BJ (cell line): ENCODE measurements at regions of chr14 and their contacts with region 1.

Region 1: DNA sequence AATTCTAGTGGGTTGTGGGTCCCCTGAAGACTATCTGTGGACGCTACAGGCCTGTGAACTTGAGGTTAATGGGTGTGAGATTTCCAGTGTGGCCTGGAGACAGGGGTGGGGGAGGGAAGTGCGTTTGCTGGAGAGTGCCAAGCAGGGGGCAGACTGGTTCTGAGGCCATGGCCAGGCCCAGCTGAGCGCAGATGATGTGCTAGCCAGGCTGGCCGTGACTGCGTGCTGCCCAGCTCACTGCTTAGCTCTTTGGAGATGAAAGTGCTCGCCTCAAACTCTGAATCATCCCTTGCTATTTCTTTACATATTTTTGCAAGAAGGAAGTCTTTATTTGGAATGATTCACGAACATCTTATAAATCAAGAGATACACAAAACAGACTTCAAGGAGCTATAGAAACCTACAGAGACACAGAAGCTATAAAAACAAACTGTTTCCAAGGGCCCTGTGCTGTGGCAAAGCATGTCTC is 75.2 kb upstream of the PLEKHG3 start:
- DNase-seq: peak; percentile 96
- H3K4me3 ChIP-seq: no peak overlapping the region
- H3K27me3 ChIP-seq: no peaks in the 10 kb centered on the region
- CTCF ChIP-seq: peak; percentile 20; the same call in 1 of the 2 replicates

Region 2: DNA sequence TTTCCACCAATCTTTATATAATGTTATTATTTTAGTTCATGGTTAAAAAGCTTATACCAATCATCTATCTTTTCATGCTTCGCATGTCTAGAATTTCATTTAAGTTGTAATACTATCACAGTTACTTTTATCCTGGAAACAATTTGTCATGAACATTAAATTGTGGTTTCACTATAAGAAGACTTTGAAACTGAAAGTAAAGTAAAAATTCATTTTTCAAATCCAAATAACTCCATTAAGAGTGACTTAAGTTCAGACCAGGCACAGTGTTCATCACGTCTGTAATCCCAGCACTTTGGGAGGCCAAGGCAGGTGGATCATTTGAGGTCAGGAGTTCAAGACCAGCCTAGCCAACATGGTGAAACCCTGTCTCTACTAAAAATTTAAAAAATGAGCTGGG is 347.2 kb before region 1 on chr14:
- CTCF ChIA-PET with region 1: no interaction called
- POLR2A ChIA-PET with region 1: no interaction called
- DNase-seq: no peak
- H3K4me3 ChIP-seq: no peak overlapping the region
- H3K27me3 ChIP-seq: no peaks in the 10 kb centered on the region; the same call in 1 of the 2 replicates
- CTCF ChIP-seq: no peak

Region 3: DNA sequence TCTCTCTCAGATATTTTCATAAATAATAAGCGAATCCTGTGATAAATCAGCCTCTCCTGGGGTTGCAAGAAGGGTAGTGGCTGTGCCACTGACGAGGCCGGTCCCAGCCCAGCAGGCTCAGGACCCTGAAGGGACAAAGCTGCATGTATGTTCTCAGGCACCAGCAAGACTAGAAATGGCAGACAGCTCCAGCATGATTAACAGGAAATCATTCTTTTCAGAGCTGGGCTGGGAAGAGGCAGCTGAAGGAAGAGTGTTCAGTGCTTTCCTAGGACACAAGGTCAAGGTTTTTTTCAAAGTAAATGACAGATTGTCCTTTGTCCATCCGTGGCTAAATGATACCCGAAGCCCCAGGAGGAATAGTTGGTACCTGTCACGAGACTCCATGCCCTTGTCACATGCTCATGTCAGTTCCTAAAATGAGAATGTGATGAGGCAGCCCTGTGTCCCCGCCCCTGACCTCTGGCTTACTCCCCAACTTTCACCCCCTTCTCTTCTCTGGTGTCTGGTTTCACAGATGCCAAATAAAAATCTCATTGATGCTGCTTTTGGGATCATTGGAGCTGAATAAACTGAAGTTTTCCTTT is 14.1 kb before region 1 on chr14:
- CTCF ChIA-PET with region 1: interaction called, 15 read pairs
- POLR2A ChIA-PET with region 1: no interaction called
- DNase-seq: no peak
- H3K4me3 ChIP-seq: no peak overlapping the region
- H3K27me3 ChIP-seq: no peaks in the 10 kb centered on the region
- CTCF ChIP-seq: no peak

Region 4: GRCh38 chr14:64726585-64726890 is 97.6 kb after region 1 on chr14:
- CTCF ChIA-PET with region 1: no interaction called
- POLR2A ChIA-PET with region 1: no interaction called
- DNase-seq: no peak
- H3K4me3 ChIP-seq: no peak overlapping the region
- H3K27me3 ChIP-seq: no peaks in the 10 kb centered on the region
- CTCF ChIP-seq: no peak